HepG2 (cell line): ENCODE measurements at regions of chr14 and their contacts with region 1.

Region 1: GRCh38 chr14:101964297-101965144 is at the start of gene DYNC1H1:
- DNase-seq: peak; percentile 83
- ATAC-seq: peak; percentile 74
- H3K4me3 ChIP-seq: peak within 1 kb of the TSS; percentile 96 to 100 (median 99)
- H3K27ac ChIP-seq: peak within 1 kb of the TSS; percentile 90
- H3K4me1 ChIP-seq: peaks cover 75% of the 10 kb centered on the region
- H3K27me3 ChIP-seq: no peaks in the 10 kb centered on the region; a peak in 1 of 5 replicates
- CTCF ChIP-seq: no peak
- EP300 ChIP-seq: no peak
- POLR2A ChIP-seq: peak; percentile 96 to 97
- RAD21 ChIP-seq: peak; percentile 44; the same call in 1 of the 2 replicates
- total RNA-seq, gene DYNC1H1: 239 and 386 TPM in 2 replicates

Region 2: GRCh38 chr14:101947906-101948665 is 16.4 kb before region 1 on chr14:
- CTCF ChIA-PET with region 1: no interaction called
- POLR2A ChIA-PET with region 1: interaction called, 17 read pairs
- in situ Hi-C with region 1: no loop called
- intact Hi-C with region 1: no loop called
- DNase-seq: peak; percentile 99
- ATAC-seq: peak; percentile 97
- H3K4me3 ChIP-seq: peak overlapping the region; percentile 88 to 96 (median 91)
- H3K27ac ChIP-seq: peak overlapping the region; percentile 91
- H3K4me1 ChIP-seq: peaks cover 20% of the 10 kb centered on the region
- H3K27me3 ChIP-seq: no peaks in the 10 kb centered on the region; a peak in 1 of 5 replicates
- CTCF ChIP-seq: 0 out of 2 replicates have a peak, but pooled peaks have one; percentile 2
- EP300 ChIP-seq: no peak; a peak in 1 of 4 replicates
- POLR2A ChIP-seq: peak; percentile 89 to 96
- RAD21 ChIP-seq: no peak; the same call in 1 of the 2 replicates

Region 3: DNA sequence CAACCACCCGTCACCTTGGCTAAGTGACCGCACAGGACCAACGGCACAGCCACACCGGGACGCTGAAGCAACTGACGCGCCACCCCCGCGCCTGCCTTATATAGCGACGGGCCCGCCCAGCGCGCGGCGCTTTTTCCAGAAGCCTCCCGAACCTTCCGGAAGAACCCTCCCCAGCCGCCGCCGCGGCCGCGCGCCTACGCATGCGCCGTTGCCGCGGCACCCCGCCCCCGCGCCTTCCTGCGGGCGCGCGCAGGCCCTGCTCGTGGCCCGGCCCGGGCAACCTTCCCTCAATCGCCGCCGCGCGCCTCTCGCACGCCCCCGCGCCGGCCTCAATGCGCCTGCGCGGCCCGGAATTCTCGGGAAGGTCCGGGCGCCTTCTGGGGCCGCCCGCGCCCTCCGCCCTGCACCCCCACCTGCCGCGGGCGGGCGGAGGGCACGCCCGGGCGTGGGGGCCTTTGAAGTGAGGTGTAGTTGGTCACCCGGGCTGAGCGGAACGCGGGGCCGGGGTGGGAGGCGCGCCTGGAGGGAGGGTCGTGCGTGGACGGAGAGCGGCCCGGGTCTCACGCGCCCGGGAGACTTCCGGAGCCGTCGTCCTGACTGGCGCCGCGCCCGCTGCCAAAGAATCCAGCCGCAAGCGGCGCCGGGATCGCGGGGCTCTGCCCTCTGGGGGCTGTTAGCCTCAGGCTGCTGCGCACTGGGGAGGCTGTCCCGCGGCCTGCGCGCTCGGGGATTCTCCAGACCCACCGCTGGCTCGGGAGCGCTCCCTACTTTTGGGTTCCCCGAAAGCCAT is 122.6 kb after region 1 on chr14 and contains the start of gene HSP90AA1:
- CTCF ChIA-PET with region 1: no interaction called
- POLR2A ChIA-PET with region 1: no interaction called
- in situ Hi-C with region 1: no loop called
- intact Hi-C with region 1: loop called (anchors 2 kb)
- DNase-seq: peak; percentile 83
- ATAC-seq: peak; percentile 86
- H3K4me3 ChIP-seq: peak within 1 kb of the TSS; percentile 84 to 91 (median 90)
- H3K27ac ChIP-seq: peak within 1 kb of the TSS; percentile 94
- H3K4me1 ChIP-seq: peaks cover 47% of the 10 kb centered on the region
- H3K27me3 ChIP-seq: no peaks in the 10 kb centered on the region; a peak in 1 of 5 replicates
- CTCF ChIP-seq: peak; percentile 41
- EP300 ChIP-seq: peak in 1 of 2 experiments; percentile 95; a peak in 2 of 4 replicates
- POLR2A ChIP-seq: peak; percentile 97 to 99
- RAD21 ChIP-seq: peak; percentile 45; the same call in 1 of the 2 replicates
- total RNA-seq, gene HSP90AA1: 636 and 1,509 TPM in 2 replicates

Region 4: GRCh38 chr14:102187058-102187457 is 222.5 kb after region 1 on chr14:
- CTCF ChIA-PET with region 1: no interaction called
- POLR2A ChIA-PET with region 1: no interaction called
- in situ Hi-C with region 1: no loop called
- intact Hi-C with region 1: no loop called
- DNase-seq: no peak
- ATAC-seq: no peak
- H3K4me3 ChIP-seq: no peak overlapping the region
- H3K27ac ChIP-seq: peak overlapping the region; percentile 52
- H3K4me1 ChIP-seq: peaks cover 71% of the 10 kb centered on the region
- H3K27me3 ChIP-seq: no peaks in the 10 kb centered on the region
- CTCF ChIP-seq: no peak
- EP300 ChIP-seq: no peak
- POLR2A ChIP-seq: no peak
- RAD21 ChIP-seq: no peak